Testis (tissue), 5 donors: ENCODE measurements at regions of chr7 and their contacts with region 1.

Region 1: GRCh38 chr7:97373736-97374135 is 256.2 kb downstream of the SDHAF3 start:
- DNase-seq: no peak
- H3K4me3 ChIP-seq: no peak overlapping the region
- H3K27ac ChIP-seq: no peak overlapping the region
- H3K4me1 ChIP-seq: no peaks in the 10 kb centered on the region
- H3K27me3 ChIP-seq: no peaks in the 10 kb centered on the region
- CTCF ChIP-seq: no peak
- POLR2A ChIP-seq: no peak

Region 2: GRCh38 chr7:97555857-97556421 is 182.2 kb after region 1 on chr7:
- intact Hi-C with region 1: loop called (anchors 10 kb)
- DNase-seq: no peak
- H3K4me3 ChIP-seq: no peak overlapping the region
- H3K27ac ChIP-seq: no peak overlapping the region
- H3K4me1 ChIP-seq: no peaks in the 10 kb centered on the region
- H3K27me3 ChIP-seq: no peaks in the 10 kb centered on the region
- CTCF ChIP-seq: no peak
- POLR2A ChIP-seq: no peak